Posterior cingulate gyrus (tissue), 11 donors: ENCODE measurements at regions of chr9 and their contacts with region 1.

Region 1: DNA sequence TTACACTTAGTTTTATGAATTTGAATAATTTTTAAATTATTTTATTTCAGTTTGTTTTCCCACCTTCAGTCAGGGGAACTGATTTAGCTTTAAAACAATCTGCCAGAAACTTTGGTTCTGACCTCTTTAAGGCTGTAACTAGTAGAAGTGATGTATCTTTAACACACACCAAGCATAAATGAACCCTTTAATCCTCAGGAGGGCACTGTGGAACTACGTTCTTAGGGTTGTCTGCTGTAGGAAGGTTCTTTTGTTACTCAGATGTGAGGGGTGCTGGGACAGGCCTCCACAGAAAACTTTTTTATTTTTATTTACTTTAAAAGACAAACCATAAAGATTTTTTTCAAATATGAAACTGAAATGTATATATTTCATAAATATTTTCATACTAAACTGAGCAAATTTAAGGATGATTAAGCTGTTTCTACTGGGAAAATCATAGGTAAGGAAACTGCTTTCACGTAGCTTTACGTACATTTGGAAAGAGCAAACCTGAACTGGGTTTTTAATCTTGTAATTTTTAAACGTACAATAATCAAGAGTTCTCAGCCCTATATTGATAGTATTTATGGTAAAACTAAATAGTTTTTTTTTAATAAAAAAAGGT is 5.3 kb downstream of the KLF4 start:
- DNase-seq: no peak

Region 2: GRCh38 chr9:106953166-106953565 is 531.1 kb before region 1 on chr9:
- intact Hi-C with region 1: no loop called
- DNase-seq: no peak

Region 3: DNA sequence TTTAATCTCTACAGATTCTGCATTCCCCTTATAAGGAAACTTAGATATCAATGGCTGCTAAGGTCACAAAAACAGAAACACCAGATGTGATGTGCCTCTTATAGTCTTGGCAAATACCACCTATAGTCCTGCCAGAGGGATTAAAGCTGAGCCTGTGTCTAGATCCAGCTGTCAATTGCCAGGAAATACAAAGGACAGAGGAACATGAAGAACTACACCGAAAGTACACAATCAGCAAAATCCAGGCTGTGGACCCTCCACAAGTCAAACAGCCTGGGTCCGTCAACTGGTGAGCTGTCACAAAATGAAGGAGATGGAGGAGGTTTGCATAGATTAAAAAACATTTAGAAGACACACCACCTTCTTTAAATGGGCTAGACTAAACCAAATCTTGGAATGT is 80.1 kb before region 1 on chr9:
- intact Hi-C with region 1: no loop called
- DNase-seq: no peak

Region 4: GRCh38 chr9:107631788-107632187 is 147.6 kb after region 1 on chr9:
- intact Hi-C with region 1: no loop called
- DNase-seq: no peak

Region 5: GRCh38 chr9:108272349-108272899 is 788.2 kb after region 1 on chr9:
- intact Hi-C with region 1: loop called (anchors 5 kb)
- DNase-seq: peak in 8 of 10 donors; percentile 18 to 92 (median 54)

Region 6: GRCh38 chr9:108565651-108566378 is 1081.6 kb after region 1 on chr9:
- intact Hi-C with region 1: loop called (anchors 1 kb)
- DNase-seq: peak in 6 of 10 donors; percentile 22 to 85 (median 44)

Region 7: GRCh38 chr9:108761655-108762347 is 1277.6 kb after region 1 on chr9:
- intact Hi-C with region 1: loop called (anchors 5 kb)
- DNase-seq: peak in 8 of 10 donors; percentile 36 to 92 (median 73)